Activated CD4-positive, alpha-beta T cell treated with anti-CD3 and anti-CD28 coated beads, Interleukin-2, amount 10 ng/mL, durations not matched to agents 24 days and 14 days (primary cell): ENCODE measurements at regions of chr13 and their contacts with region 1.

Region 1: DNA sequence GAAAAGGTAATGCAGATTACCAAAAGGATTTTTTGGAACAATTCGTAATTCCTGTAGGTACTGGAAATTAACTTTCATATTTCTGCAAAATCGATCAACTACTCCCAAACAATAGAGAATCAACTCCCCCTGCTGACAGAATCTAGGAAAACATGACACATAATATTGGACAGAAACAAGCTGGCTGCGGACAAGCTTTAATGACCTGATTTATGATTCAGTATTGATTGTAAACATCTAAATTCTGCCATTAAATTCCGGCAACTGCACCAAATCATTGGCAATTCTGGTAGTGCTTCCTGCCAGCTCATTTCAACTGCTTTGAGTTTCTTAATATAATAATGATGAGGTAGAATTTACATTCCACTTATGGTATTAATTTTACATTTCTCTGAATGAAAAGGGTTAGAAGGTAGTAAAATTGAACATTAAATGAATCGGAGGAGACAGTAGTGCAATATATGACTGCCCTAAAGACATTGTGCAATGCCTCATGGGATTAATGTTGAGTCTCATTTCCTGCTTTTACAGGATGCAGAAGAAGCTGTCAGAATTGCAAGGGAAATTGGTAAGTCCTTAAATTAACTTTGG is 146.5 kb downstream of the PCCA start:
- DNase-seq: peak; percentile 76
- H3K4me3 Mint-ChIP-seq: no peak overlapping the region
- H3K27ac Mint-ChIP-seq: no peak overlapping the region
- H3K4me1 Mint-ChIP-seq: peaks cover 7% of the 10 kb centered on the region
- H3K27me3 Mint-ChIP-seq: no peaks in the 10 kb centered on the region

Region 2: DNA sequence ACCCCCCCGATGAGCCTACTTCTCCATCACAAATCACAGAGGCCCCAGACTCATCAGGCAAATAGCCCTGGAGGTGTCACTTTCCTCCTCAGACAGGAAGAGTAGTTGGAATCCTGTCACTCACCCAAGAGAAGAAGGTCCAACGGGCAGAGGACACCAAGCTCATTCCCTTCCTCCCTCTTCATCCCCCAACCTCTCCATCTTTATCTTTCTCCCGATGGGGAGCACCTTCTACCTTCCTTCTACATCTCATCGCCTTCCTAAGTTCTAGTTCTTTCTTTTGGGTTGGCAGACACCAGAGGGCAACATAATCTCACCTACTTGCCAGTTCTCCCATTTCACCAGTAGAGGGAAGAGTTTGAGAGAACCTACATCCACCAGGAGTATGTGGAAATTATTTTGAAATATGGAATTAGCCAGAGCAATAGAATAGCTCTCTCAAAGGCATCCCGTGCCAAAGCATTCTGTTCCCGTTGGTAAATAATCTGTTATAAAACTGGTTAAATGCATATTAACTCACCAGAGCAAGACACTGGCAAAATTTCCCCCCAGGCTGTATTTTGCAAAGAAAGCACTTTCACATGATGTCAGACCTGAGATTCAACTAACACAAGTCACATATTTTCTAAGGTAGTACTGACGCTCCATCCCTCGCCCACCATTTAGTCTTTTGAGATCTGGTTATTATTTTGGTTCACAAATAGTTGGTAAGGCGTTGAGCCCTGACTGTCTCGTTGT is 318.9 kb before region 1 on chr13:
- intact Hi-C with region 1: loop called (anchors 1 kb)
- DNase-seq: peak; percentile 77
- H3K4me3 Mint-ChIP-seq: no peak overlapping the region
- H3K27ac Mint-ChIP-seq: no peak overlapping the region
- H3K4me1 Mint-ChIP-seq: peaks cover 21% of the 10 kb centered on the region
- H3K27me3 Mint-ChIP-seq: peaks cover 9% of the 10 kb centered on the region